B cell (primary cell): ENCODE measurements at regions of chr12 and their contacts with region 1.

Region 1: DNA sequence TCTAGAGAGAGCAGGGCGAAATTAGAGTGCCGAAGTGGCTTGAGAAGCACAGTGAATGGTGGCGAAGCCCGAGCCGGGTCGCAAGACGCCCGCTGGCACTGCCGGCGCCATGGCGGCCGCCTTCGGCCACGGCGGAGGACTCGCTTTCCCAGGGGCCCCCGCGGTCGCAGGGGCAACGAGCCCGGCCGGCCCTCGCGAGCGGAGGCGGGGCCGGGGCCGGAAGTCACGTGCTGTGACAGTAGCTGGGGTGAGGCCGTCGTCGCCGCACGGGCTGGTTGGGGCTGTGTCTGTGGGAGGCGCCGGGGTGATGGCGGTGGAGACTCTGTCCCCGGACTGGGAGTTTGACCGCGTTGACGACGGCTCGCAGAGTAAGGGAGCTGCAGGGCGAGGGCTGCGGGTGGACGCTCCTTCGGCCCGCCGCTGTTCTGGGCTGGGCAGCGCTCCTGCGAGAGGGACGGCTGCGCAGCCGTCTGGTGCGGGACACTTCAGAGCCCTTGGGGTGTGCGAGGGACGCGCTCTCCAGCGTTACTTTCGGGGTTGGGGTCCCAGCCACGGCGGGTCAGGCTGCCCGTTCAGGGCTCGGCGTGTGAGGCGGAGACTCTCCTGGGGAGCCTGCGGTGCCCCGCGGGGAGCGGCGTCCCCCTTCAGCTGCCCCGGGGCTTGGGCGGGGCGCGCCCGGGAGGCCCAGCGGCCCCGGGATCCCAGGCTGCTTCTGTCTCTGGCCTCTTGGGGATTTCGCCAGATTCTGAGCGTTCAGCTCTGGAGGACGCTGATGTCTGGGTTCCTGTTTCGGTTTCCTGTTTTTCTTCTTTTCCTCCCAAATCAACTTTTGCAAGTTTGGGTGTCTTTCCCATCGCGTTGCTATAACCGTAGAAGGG is at the start of gene WASHC4:
- DNase-seq: peak; percentile 96
- ATAC-seq: peak; percentile 88
- H3K4me3 ChIP-seq: peak within 1 kb of the TSS; percentile 89 to 99 (median 97)
- H3K4me3 Mint-ChIP-seq: peak within 1 kb of the TSS; percentile 98
- H3K27ac ChIP-seq: peak within 1 kb of the TSS; percentile 93 to 98
- H3K27ac Mint-ChIP-seq: peak within 1 kb of the TSS; percentile 99
- H3K4me1 ChIP-seq: peaks cover 7 to 35% of the 10 kb centered on the region in 2 donors
- H3K4me1 Mint-ChIP-seq: peaks cover 31% of the 10 kb centered on the region
- H3K27me3 ChIP-seq: peaks cover 0 to 9% (median 0%) of the 10 kb centered on the region in 4 experiments
- H3K27me3 Mint-ChIP-seq: peaks cover 8% of the 10 kb centered on the region
- CTCF ChIP-seq: no peak
- total RNA-seq, gene WASHC4: 240 and 247 TPM in 2 replicates

Region 2: GRCh38 chr12:103965590-103966504 is 1141.9 kb before region 1 on chr12 and contains the start of gene TDG:
- CTCF ChIA-PET with region 1: no interaction called
- POLR2A ChIA-PET with region 1: interaction called, 11 read pairs
- intact Hi-C with region 1: loop called (anchors 2 kb)
- DNase-seq: peak; percentile 98
- ATAC-seq: peak; percentile 94
- H3K4me3 ChIP-seq: peak within 1 kb of the TSS; percentile 70 to 96 (median 85)
- H3K4me3 Mint-ChIP-seq: peak within 1 kb of the TSS; percentile 98
- H3K27ac ChIP-seq: peak within 1 kb of the TSS; percentile 81 to 95
- H3K27ac Mint-ChIP-seq: peak within 1 kb of the TSS; percentile 97
- H3K4me1 ChIP-seq: peaks cover 26% of the 10 kb centered on the region in 2 donors
- H3K4me1 Mint-ChIP-seq: peaks cover 41% of the 10 kb centered on the region
- H3K27me3 ChIP-seq: no peaks in the 10 kb centered on the region
- H3K27me3 Mint-ChIP-seq: no peaks in the 10 kb centered on the region
- CTCF ChIP-seq: peak; percentile 26
- total RNA-seq, gene TDG: 35.5 and 40.5 TPM in 2 replicates

Region 3: GRCh38 chr12:104095289-104095688 is 1012.4 kb before region 1 on chr12:
- CTCF ChIA-PET with region 1: no interaction called
- POLR2A ChIA-PET with region 1: no interaction called
- intact Hi-C with region 1: no loop called
- DNase-seq: no peak
- ATAC-seq: no peak
- H3K4me3 ChIP-seq: no peak overlapping the region
- H3K4me3 Mint-ChIP-seq: no peak overlapping the region
- H3K27ac ChIP-seq: no peak overlapping the region
- H3K27ac Mint-ChIP-seq: no peak overlapping the region
- H3K4me1 ChIP-seq: no peaks in the 10 kb centered on the region
- H3K4me1 Mint-ChIP-seq: no peaks in the 10 kb centered on the region
- H3K27me3 ChIP-seq: no peaks in the 10 kb centered on the region
- H3K27me3 Mint-ChIP-seq: no peaks in the 10 kb centered on the region
- CTCF ChIP-seq: no peak

Region 4: DNA sequence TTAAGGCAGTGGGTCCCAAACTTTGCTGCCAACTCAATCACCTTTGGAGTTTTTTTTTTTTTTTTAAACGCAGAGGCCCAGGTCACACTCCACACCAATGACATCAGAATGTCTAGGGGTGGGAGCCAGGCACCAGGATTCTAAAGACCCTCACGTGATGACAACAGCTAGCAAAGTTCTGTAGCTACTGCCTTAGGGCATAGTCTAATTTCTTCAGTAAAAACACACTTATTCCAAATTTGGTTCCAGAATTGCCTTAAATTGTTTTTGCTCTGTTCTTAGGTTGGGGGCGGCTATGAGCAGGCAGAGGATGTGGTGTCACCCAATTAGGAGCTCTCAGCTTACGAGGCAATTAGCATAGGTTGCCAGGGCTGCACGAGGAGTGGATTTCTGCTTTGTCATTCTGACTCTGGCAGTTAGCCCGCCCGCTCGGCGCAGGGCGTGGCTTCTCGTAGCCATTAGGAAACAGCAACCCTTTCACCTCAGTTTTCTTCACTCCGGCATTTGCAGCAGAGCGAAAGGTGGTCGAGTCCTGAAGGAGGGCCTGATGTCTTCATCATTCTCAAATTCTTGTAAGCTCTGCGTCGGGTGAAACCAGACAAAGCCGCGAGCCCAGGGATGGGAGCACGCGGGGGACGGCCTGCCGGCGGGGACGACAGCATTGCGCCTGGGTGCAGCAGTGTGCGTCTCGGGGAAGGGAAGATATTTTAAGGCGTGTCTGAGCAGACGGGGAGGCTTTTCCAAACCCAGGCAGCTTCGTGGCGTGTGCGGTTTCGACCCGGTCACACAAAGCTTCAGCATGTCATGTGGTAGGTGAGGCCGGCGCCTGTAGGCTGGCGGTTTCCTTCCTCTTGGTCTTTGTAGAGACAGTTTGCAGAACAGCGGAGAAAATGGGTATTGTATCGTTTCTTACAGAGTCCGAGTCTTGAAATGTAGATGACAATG is 820.9 kb before region 1 on chr12:
- CTCF ChIA-PET with region 1: no interaction called
- POLR2A ChIA-PET with region 1: interaction called, 5 read pairs
- intact Hi-C with region 1: loop called (anchors 1 kb)
- DNase-seq: peak; percentile 90
- ATAC-seq: peak; percentile 83
- H3K4me3 ChIP-seq: peak overlapping the region; percentile 61 to 93 (median 82)
- H3K4me3 Mint-ChIP-seq: peak overlapping the region; percentile 100
- H3K27ac ChIP-seq: peak overlapping the region; percentile 75 to 79
- H3K27ac Mint-ChIP-seq: peak overlapping the region; percentile 99
- H3K4me1 ChIP-seq: peaks cover 25 to 29% of the 10 kb centered on the region in 2 donors
- H3K4me1 Mint-ChIP-seq: peaks cover 37% of the 10 kb centered on the region
- H3K27me3 ChIP-seq: no peaks in the 10 kb centered on the region
- H3K27me3 Mint-ChIP-seq: no peaks in the 10 kb centered on the region
- CTCF ChIP-seq: no peak

Region 5: GRCh38 chr12:104958009-104958945 is 149.5 kb before region 1 on chr12 and contains the start of gene SLC41A2:
- CTCF ChIA-PET with region 1: no interaction called
- POLR2A ChIA-PET with region 1: no interaction called
- intact Hi-C with region 1: loop called (anchors 5 kb)
- DNase-seq: peak; percentile 91
- ATAC-seq: peak; percentile 84
- H3K4me3 ChIP-seq: peak within 1 kb of the TSS; percentile 57 to 80 (median 75)
- H3K4me3 Mint-ChIP-seq: peak within 1 kb of the TSS; percentile 95
- H3K27ac ChIP-seq: peak within 1 kb of the TSS; percentile 79 to 80
- H3K27ac Mint-ChIP-seq: peak within 1 kb of the TSS; percentile 93
- H3K4me1 ChIP-seq: peaks cover 13 to 16% of the 10 kb centered on the region in 2 donors
- H3K4me1 Mint-ChIP-seq: peaks cover 23% of the 10 kb centered on the region
- H3K27me3 ChIP-seq: peaks cover 0 to 2% (median 0%) of the 10 kb centered on the region in 4 experiments
- H3K27me3 Mint-ChIP-seq: peaks cover 6% of the 10 kb centered on the region
- CTCF ChIP-seq: peak; percentile 48
- total RNA-seq, gene SLC41A2: 13.0 TPM in 2 replicates

Region 6: DNA sequence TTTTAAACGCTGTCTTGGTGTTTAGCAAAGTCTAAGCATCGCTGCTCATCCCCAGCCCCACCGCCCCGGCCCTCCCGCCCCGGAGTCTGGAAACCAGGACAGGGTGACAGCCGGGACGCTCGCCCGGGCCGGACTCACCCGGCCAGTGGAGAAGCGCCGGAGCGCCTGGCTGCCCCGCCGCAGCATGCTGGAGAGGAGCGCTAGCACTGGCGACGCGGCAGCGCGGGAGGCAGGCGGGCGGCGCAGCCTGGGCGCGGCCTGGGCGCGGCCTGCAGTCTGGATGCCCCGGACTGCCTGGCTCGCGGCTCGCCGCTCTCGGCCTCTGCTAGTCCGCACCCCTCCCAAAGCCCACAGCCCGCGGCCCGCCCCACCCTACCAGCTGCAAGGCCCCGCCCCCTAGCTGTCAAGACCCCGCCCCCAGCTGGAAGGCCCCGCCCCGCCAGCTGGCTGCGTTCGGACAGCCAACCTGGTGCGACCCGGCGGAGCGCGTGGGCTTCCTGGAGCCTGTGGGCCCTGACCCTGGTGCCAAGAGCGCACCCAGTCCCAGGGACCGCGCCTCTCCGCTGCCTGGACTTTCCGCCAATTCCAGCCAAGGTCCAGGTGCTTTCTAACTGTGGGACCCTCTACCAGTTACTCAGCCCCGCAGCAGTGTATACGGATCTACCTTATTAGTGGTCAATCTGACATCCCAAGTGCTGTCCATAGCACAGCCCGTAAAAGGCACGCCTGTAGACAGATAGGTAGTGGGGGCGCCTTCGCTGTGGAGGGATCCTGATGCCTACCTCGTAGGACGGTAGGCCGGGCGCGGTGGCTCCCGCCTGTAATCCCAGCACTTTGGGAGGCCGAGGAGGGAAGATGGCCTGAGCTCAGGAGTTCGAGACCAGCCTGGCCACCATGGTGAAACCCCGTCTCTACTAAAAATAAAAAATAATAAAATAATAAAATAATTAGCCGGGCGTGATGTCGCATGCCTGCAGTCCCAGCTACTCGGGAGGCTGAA is 23.2 kb before region 1 on chr12 and contains the start of gene ALDH1L2:
- CTCF ChIA-PET with region 1: no interaction called
- POLR2A ChIA-PET with region 1: no interaction called
- intact Hi-C with region 1: loop called (anchors 2 kb)
- DNase-seq: peak; percentile 64
- ATAC-seq: peak; percentile 96
- H3K4me3 ChIP-seq: peak within 1 kb of the TSS; percentile 15 to 47 (median 39)
- H3K4me3 Mint-ChIP-seq: peak within 1 kb of the TSS; percentile 86
- H3K27ac ChIP-seq: no peak within 1 kb of the TSS
- H3K27ac Mint-ChIP-seq: peak within 1 kb of the TSS; percentile 54
- H3K4me1 ChIP-seq: peaks cover 11% of the 10 kb centered on the region in 2 donors
- H3K4me1 Mint-ChIP-seq: peaks cover 11% of the 10 kb centered on the region
- H3K27me3 ChIP-seq: peaks cover 0 to 10% (median 3%) of the 10 kb centered on the region in 4 experiments
- H3K27me3 Mint-ChIP-seq: peaks cover 29% of the 10 kb centered on the region
- CTCF ChIP-seq: no peak
- total RNA-seq, gene ALDH1L2: 0.32 and 0.46 TPM in 2 replicates

Region 7: DNA sequence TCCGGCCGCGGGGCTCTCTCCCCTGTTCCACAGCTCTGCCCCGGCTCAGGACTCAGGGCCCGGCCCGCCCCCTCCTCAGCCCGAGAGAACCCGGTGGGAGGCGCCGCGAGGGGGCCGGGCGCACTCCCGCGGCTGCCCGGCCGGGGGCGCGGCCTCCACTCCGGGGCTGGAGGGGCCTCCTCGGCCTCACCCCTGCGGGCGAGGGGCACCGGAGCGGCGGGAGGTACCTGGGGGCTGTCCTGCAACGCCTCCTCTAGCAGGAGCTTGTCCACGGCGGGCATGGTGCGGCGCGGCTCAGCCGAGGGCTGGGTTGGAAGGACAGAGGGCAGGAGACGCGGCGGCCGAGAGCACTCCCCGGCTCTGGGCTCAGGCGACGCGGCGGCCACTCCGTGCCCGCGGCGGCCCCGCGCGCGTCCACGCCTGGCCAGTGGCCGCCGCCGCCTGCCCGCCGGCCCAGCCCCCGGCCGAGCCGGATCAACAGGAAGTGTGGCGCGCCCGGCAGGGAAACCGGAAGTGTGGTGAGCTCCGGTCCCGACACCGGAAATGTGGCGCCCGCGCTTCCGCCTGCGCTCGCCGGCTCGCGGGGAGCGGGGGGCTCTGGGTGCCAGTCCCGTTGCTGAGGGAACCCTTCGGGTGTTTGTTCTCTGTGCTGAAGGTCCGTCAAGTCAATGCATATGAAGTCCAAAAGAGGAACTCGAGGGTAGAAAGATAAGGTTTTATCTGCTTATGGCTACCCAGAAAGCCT is 128.2 kb after region 1 on chr12 and contains the start of gene APPL2:
- CTCF ChIA-PET with region 1: interaction called, 4 read pairs
- POLR2A ChIA-PET with region 1: interaction called, 8 read pairs
- intact Hi-C with region 1: loop called (anchors 1 kb)
- DNase-seq: peak; percentile 92
- ATAC-seq: peak; percentile 81
- H3K4me3 ChIP-seq: peak within 1 kb of the TSS; percentile 51 to 90 (median 71)
- H3K4me3 Mint-ChIP-seq: peak within 1 kb of the TSS; percentile 95
- H3K27ac ChIP-seq: peak within 1 kb of the TSS; percentile 70 to 95
- H3K27ac Mint-ChIP-seq: peak within 1 kb of the TSS; percentile 94
- H3K4me1 ChIP-seq: peaks cover 44 to 49% of the 10 kb centered on the region in 2 donors
- H3K4me1 Mint-ChIP-seq: peaks cover 38% of the 10 kb centered on the region
- H3K27me3 ChIP-seq: no peaks in the 10 kb centered on the region
- H3K27me3 Mint-ChIP-seq: no peaks in the 10 kb centered on the region
- CTCF ChIP-seq: peak; percentile 66
- total RNA-seq, gene APPL2: 57.7 and 58.3 TPM in 2 replicates